ENCODE measurements at regions of chr2 and their contacts with region 1.

Region 1: GRCh38 chr2:189552334-189552990 is 28.1 kb downstream of the SLC40A1 start:
- DNase-seq: no peak
- H3K4me3 ChIP-seq: no peak overlapping the region
- H3K27ac ChIP-seq: no peak overlapping the region
- H3K4me1 ChIP-seq: peaks cover 22% of the 10 kb centered on the region
- H3K27me3 ChIP-seq: no peaks in the 10 kb centered on the region
- CTCF ChIP-seq: no peak

Region 2: GRCh38 chr2:189625638-189626037 is 73.2 kb after region 1 on chr2:
- CTCF ChIA-PET with region 1: no interaction called
- POLR2A ChIA-PET with region 1: no interaction called
- intact Hi-C with region 1: loop called (anchors 2 kb)
- DNase-seq: no peak
- H3K4me3 ChIP-seq: no peak overlapping the region
- H3K27ac ChIP-seq: no peak overlapping the region
- H3K4me1 ChIP-seq: peaks cover 12% of the 10 kb centered on the region
- H3K27me3 ChIP-seq: no peaks in the 10 kb centered on the region
- CTCF ChIP-seq: no peak